Naive thymus-derived CD4-positive, alpha-beta T cell (primary cell): ENCODE measurements at regions of chr15 and their contacts with region 1.

Region 1: GRCh38 chr15:67501177-67501835 is 19.6 kb upstream of the C15orf61 start:
- DNase-seq: peak in 4 of 9 donors; percentile 6 to 27 (median 17)
- ATAC-seq: peak; percentile 55
- H3K4me3 ChIP-seq: no peak overlapping the region
- H3K4me3 Mint-ChIP-seq: no peak overlapping the region
- H3K27ac ChIP-seq: no peak overlapping the region
- H3K27ac Mint-ChIP-seq: no peak overlapping the region
- H3K4me1 ChIP-seq: no peaks in the 10 kb centered on the region
- H3K4me1 Mint-ChIP-seq: peaks cover 0 to 5% (median 0%) of the 10 kb centered on the region in 7 donors
- H3K27me3 ChIP-seq: peaks cover 0 to 2% of the 10 kb centered on the region in 2 donors
- H3K27me3 Mint-ChIP-seq: peaks cover 0 to 9% (median 0%) of the 10 kb centered on the region in 5 donors

Region 2: GRCh38 chr15:67550522-67550921 is 49.2 kb after region 1 on chr15:
- CTCF ChIA-PET with region 1: interaction called, 4 read pairs
- POLR2A ChIA-PET with region 1: no interaction called
- intact Hi-C with region 1: loop called in 1 of 2 experiments (anchors 10 kb)
- DNase-seq: no peak
- ATAC-seq: no peak
- H3K4me3 ChIP-seq: no peak overlapping the region
- H3K4me3 Mint-ChIP-seq: no peak overlapping the region
- H3K27ac ChIP-seq: no peak overlapping the region
- H3K27ac Mint-ChIP-seq: peak overlapping the region in 1 of 9 donors; percentile 43
- H3K4me1 ChIP-seq: peaks cover 0 to 5% of the 10 kb centered on the region in 2 donors
- H3K4me1 Mint-ChIP-seq: peaks cover 11 to 45% (median 32%) of the 10 kb centered on the region in 7 donors
- H3K27me3 ChIP-seq: no peaks in the 10 kb centered on the region
- H3K27me3 Mint-ChIP-seq: no peaks in the 10 kb centered on the region

Region 3: GRCh38 chr15:67833710-67834511 is 332.6 kb after region 1 on chr15:
- CTCF ChIA-PET with region 1: interaction called, 8 read pairs
- POLR2A ChIA-PET with region 1: interaction called, 4 read pairs
- intact Hi-C with region 1: loop called (anchors 1 to 5 kb)
- DNase-seq: peak in 4 of 9 donors; percentile 34 to 54 (median 45)
- ATAC-seq: peak; percentile 51
- H3K4me3 ChIP-seq: peak overlapping the region; percentile 59
- H3K4me3 Mint-ChIP-seq: peak overlapping the region; percentile 76 to 92 (median 84)
- H3K27ac ChIP-seq: no peak overlapping the region
- H3K27ac Mint-ChIP-seq: peak overlapping the region in 1 of 9 donors; percentile 48
- H3K4me1 ChIP-seq: peaks cover 34 to 43% of the 10 kb centered on the region in 2 donors
- H3K4me1 Mint-ChIP-seq: peaks cover 27 to 74% (median 46%) of the 10 kb centered on the region in 7 donors
- H3K27me3 ChIP-seq: peaks cover 5 to 29% of the 10 kb centered on the region in 2 donors
- H3K27me3 Mint-ChIP-seq: peaks cover 47 to 89% (median 56%) of the 10 kb centered on the region in 5 donors

Region 4: DNA sequence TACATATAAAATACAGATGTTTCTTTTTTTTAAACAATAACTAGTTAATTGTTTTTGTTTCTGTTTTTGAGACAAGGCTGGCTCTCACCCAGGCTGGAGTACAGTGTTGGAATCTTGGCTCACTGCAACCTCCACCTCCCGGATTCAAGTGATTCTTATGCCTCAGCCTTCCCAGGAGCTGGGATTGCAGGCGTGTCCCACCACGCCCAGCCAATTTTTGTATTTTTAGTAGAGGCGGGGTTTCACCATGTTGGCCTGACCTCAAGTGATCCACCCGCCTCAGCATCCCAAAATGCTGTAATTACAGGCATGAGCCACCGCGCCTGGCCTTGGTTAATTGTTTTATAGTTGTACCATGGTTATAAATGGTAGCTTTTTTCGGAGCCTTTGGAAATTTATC is 625.1 kb after region 1 on chr15:
- CTCF ChIA-PET with region 1: no interaction called
- POLR2A ChIA-PET with region 1: no interaction called
- intact Hi-C with region 1: no loop called
- DNase-seq: no peak
- ATAC-seq: no peak
- H3K4me3 ChIP-seq: no peak overlapping the region
- H3K4me3 Mint-ChIP-seq: no peak overlapping the region
- H3K27ac ChIP-seq: no peak overlapping the region
- H3K27ac Mint-ChIP-seq: no peak overlapping the region
- H3K4me1 ChIP-seq: peaks cover 0 to 3% of the 10 kb centered on the region in 2 donors
- H3K4me1 Mint-ChIP-seq: peaks cover 16 to 48% (median 42%) of the 10 kb centered on the region in 7 donors
- H3K27me3 ChIP-seq: no peaks in the 10 kb centered on the region
- H3K27me3 Mint-ChIP-seq: no peaks in the 10 kb centered on the region